ENCODE measurements at regions of chr15 and their contacts with region 1.

Region 1: DNA sequence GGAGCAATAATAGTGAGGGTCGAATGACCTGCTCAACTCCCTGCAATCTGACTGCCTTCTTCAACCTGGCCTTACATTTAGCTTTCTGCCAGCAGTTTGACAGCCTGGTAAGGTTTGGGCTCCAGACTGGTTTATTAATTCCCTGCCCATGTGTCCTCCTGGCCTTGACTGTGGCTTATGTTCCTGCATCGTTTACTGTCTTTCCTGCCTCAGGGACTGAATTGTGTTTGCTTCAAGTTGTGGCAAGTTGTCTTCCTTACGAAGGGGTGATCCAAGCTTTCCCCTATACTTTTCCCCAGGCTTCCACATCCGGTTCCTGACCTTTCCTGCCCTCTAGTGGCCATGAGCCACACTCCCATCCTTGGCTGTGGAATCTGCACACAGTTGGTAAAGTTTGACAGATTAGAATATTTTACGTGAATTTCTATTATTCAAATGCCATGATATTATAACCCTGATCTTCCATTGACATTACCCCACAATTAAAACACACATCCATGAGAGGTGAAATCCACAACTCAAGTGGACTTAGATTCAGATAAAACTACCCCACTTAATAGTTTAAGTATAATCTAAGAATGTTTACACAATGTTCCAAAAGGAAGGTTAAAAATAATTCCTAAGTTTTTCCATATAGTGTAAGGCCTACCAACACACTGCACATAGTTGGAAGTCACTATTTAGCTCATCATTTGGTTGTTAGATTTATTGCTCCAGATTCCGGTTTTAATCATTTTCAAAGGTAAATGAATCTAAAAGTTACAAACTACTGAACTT is 95.7 kb downstream of the NEDD4 start:
- DNase-seq: peak; percentile 63

Region 2: GRCh38 chr15:55884223-55884622 is 13.5 kb before region 1 on chr15:
- CTCF ChIA-PET with region 1: no interaction called
- POLR2A ChIA-PET with region 1: no interaction called
- DNase-seq: no peak

Region 3: DNA sequence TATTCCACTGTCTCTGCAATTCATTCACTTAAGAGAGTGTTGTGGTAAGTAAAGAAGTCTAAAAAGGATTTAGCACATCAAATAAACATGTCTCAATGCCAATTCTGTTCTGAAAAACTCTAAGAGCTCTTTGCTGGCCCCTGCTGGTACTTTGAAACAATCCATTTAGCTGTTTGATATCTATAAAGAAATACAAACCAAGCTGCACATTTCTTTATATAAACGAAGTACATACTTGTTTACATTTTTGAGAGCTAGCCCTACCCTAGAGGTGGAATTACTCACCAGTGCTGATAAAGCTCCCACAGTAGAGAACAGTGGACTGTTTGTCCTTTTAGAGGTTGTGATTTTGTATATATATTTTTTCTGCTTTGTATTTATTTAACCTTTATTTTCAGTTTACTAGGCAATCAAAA is 20.1 kb after region 1 on chr15:
- CTCF ChIA-PET with region 1: interaction called, 12 read pairs
- POLR2A ChIA-PET with region 1: no interaction called
- DNase-seq: peak; percentile 12

Region 4: DNA sequence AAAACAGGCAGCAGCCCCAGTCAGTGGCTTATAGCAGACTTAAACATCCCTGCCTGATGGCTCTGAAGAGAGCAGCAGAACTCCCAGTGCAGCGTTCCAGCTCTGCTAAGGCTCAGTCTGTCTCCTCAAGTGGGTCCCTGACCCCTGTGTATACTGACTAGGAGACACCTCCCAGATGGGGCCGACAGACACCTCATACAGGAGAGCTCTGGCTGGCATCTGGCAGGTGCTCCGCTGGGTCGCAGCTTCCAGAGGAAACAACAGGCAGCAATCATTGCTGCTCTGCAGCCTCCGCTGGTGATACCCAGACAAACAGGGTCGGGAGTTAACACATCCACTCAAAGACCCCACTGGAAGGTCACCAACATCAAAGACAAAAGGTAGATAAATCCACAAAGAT is 252.5 kb after region 1 on chr15:
- CTCF ChIA-PET with region 1: no interaction called
- POLR2A ChIA-PET with region 1: no interaction called
- DNase-seq: no peak

Region 5: GRCh38 chr15:56168394-56168793 is 270.6 kb after region 1 on chr15:
- CTCF ChIA-PET with region 1: no interaction called
- POLR2A ChIA-PET with region 1: no interaction called
- DNase-seq: no peak